Ascending aorta (tissue), 2 donors: ENCODE measurements at regions of chr15 and their contacts with region 1.

Region 1: GRCh38 chr15:97084650-97085049 is 754.1 kb downstream of the NR2F2 start:
- DNase-seq: no peak
- H3K4me3 ChIP-seq: no peak overlapping the region
- H3K27ac ChIP-seq: no peak overlapping the region
- H3K4me1 ChIP-seq: no peaks in the 10 kb centered on the region
- H3K27me3 ChIP-seq: no peaks in the 10 kb centered on the region
- CTCF ChIP-seq: no peak

Region 2: GRCh38 chr15:97105471-97105870 is 20.8 kb after region 1 on chr15:
- intact Hi-C with region 1: loop called (anchors 2 kb)
- DNase-seq: no peak
- H3K4me3 ChIP-seq: no peak overlapping the region
- H3K27ac ChIP-seq: no peak overlapping the region
- H3K4me1 ChIP-seq: no peaks in the 10 kb centered on the region
- H3K27me3 ChIP-seq: no peaks in the 10 kb centered on the region
- CTCF ChIP-seq: no peak

Region 3: DNA sequence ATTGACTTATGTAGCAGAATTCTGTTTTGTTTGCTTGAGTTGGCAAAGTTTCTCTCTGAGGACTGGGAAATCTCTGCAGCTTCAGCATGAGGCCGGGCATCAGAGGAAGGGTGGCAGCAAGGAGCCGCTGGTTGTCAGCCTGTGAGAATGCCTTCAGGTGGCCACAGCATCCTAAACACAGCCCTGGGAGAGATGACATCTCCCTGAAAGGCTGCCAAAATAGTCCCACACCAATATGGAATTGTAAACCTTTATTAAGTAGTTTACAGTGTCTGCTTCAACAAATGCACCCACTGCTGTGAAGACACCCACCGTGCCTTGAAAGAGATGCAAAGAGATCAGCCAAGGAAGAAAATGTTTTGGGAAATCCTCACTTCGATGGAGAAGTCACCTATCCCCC is 266.2 kb after region 1 on chr15:
- intact Hi-C with region 1: no loop called
- DNase-seq: no peak
- H3K4me3 ChIP-seq: no peak overlapping the region
- H3K27ac ChIP-seq: no peak overlapping the region
- H3K4me1 ChIP-seq: no peaks in the 10 kb centered on the region
- H3K27me3 ChIP-seq: no peaks in the 10 kb centered on the region
- CTCF ChIP-seq: no peak